H1 (cell line): ENCODE measurements at regions of chr1 and their contacts with region 1.

Region 1: GRCh38 chr1:112925015-112925414 is 31.0 kb downstream of the SLC16A1 start:
- DNase-seq: no peak
- H3K4me3 ChIP-seq: no peak overlapping the region
- H3K27ac ChIP-seq: no peak overlapping the region
- H3K4me1 ChIP-seq: no peaks in the 10 kb centered on the region; a peak in 1 of 7 replicates
- H3K27me3 ChIP-seq: no peaks in the 10 kb centered on the region
- CTCF ChIP-seq: peak in 1 of 3 experiments; percentile 2; a peak in 1 of 4 replicates
- EP300 ChIP-seq: no peak
- POLR2A ChIP-seq: no peak
- RAD21 ChIP-seq: no peak

Region 2: DNA sequence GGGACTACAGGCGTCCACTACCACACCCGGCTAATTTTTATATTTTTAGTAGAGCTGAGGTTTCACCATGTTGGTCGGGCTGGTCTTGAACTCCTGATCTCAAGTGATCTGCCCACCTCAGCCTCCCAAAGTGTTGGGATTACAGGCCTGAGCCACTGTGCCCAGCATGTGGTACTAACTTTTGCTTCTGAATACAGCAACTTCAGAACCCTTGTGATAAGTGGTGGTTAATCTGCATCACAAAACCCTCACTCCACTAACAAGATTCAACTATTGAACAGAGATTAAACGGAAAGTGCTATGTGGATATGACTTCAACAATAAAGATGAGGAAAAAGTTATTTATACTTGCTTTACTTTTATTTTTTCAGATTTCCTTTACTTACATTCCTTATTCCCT is 13.5 kb before region 1 on chr1:
- CTCF ChIA-PET with region 1: interaction called, 10 read pairs
- POLR2A ChIA-PET with region 1: interaction called, 11 read pairs
- DNase-seq: peak in 1 of 2 experiments; percentile 53
- H3K4me3 ChIP-seq: no peak overlapping the region; a peak in 1 of 8 replicates
- H3K27ac ChIP-seq: no peak overlapping the region
- H3K4me1 ChIP-seq: peaks cover 0 to 23% (median 19%) of the 10 kb centered on the region in 4 experiments; a peak in 6 of 7 replicates
- H3K27me3 ChIP-seq: no peaks in the 10 kb centered on the region
- CTCF ChIP-seq: no peak
- EP300 ChIP-seq: no peak
- POLR2A ChIP-seq: no peak
- RAD21 ChIP-seq: no peak